ENCODE measurements at regions of chr7 and their contacts with region 1.

Region 1: DNA sequence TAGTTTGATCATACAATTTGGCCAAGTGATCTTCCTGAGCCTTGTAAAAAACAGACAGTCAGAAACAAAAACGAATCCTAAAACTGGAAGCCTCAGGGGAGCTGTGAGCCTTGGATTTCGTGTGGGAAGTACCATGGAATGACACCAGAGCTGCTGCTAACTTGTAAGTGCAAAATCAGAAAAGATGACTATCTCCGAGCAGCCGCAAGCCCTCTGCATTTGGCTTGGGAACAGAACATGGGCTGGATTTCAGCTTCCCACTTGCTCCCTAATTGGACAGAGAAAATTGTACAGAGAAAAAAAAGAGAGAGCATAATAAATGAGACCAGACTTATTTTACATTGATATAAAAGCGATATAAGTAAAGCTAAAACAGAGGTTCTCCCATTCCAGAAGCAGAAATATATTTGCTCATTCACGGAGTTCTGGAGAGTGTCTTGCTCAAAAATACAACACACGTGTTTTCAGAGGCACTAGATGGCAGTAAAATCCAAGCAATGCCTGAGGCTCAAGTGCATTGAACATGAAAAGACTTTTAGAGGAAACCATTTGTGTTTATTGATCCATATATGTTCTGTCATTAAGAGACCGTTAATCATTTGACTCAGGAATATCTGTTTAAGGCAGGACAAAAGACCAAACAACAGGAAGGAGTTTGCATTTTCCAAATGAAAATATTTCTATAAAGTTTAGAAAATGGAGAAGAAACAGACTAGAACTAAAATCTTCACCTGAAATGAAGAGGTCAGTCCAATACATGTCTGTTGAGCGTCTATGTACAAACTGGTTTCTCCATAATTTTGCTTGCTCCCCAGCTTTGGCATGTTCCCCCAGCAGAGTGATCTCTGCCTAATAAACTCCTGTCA is 78.3 kb upstream of the SLC26A5 start:
- DNase-seq: no peak
- ATAC-seq: peak; percentile 60
- H3K4me3 ChIP-seq: no peak overlapping the region
- H3K27ac ChIP-seq: no peak overlapping the region
- H3K4me1 ChIP-seq: no peaks in the 10 kb centered on the region
- H3K27me3 ChIP-seq: peaks cover 0 to 2% of the 10 kb centered on the region in 2 donors

Region 2: DNA sequence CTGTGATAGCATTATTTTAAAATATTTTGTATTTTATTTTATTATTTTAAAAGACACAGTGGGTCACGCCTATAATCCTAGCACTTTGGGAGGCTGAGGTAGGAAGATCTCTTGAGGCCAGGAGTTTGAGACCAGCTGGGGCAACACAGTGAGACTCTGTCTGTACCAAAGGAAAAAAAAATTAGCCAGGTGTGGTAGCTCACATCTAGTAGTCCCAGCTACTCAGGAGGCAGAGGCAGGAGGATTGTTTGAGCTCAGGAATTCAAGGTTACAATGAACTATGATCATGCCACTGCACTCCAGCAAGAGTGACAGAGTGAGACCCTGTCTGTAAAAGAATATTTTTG is 486.8 kb before region 1 on chr7:
- intact Hi-C with region 1: no loop called
- DNase-seq: no peak
- ATAC-seq: no peak
- H3K4me3 ChIP-seq: no peak overlapping the region
- H3K27ac ChIP-seq: no peak overlapping the region
- H3K4me1 ChIP-seq: no peaks in the 10 kb centered on the region
- H3K27me3 ChIP-seq: no peaks in the 10 kb centered on the region

Region 3: GRCh38 chr7:103857435-103857834 is 333.2 kb after region 1 on chr7:
- intact Hi-C with region 1: no loop called
- DNase-seq: no peak
- ATAC-seq: no peak
- H3K4me3 ChIP-seq: no peak overlapping the region
- H3K27ac ChIP-seq: no peak overlapping the region
- H3K4me1 ChIP-seq: no peaks in the 10 kb centered on the region
- H3K27me3 ChIP-seq: no peaks in the 10 kb centered on the region

Region 4: GRCh38 chr7:104156842-104157277 is 632.6 kb after region 1 on chr7:
- intact Hi-C with region 1: loop called (anchors 5 to 10 kb)
- DNase-seq: no peak
- ATAC-seq: no peak
- H3K4me3 ChIP-seq: no peak overlapping the region
- H3K27ac ChIP-seq: no peak overlapping the region
- H3K4me1 ChIP-seq: no peaks in the 10 kb centered on the region
- H3K27me3 ChIP-seq: no peaks in the 10 kb centered on the region